ENCODE measurements at regions of chr6 and their contacts with region 1.

Region 1: GRCh38 chr6:6397842-6398241 is 77.4 kb upstream of the F13A1 start:
- DNase-seq: no peak
- H3K4me3 ChIP-seq: no peak overlapping the region
- H3K27ac ChIP-seq: no peak overlapping the region
- H3K4me1 ChIP-seq: peaks cover 53% of the 10 kb centered on the region
- CTCF ChIP-seq: no peak

Region 2: DNA sequence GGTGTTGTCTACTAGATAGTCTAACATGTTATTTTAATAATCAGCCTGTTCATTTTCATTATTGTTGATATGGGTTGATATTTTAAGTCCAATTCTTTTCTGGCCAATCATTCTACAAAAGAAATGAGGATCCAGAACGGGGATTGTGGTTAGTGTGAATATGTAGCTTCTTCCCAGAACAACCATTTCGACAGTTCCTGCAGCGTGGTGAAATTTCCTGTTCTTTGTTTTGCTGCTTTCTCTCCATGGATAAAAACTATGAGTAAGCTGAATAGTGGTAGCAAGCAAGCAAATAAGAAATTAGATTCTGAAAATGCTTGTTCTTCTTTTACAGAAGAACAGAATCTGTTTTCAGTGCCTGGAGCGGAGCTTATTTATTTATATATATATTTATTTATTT is 11.8 kb before region 1 on chr6:
- CTCF ChIA-PET with region 1: no interaction called
- POLR2A ChIA-PET with region 1: interaction called, 10 read pairs
- intact Hi-C with region 1: no loop called
- DNase-seq: no peak
- H3K4me3 ChIP-seq: no peak overlapping the region
- H3K27ac ChIP-seq: peak overlapping the region; percentile 82
- H3K4me1 ChIP-seq: peaks cover 91% of the 10 kb centered on the region
- CTCF ChIP-seq: no peak

Measured in OCI-LY7 (cell line).